ENCODE measurements at regions of chr9 and their contacts with region 1.

Region 1: GRCh38 chr9:34994260-34994899 is 4.8 kb downstream of the DNAJB5 start:
- DNase-seq: peak in 1 of 2 donors; percentile 62
- ATAC-seq: peak in 3 of 4 donors; percentile 14 to 17 (median 16)
- H3K4me3 ChIP-seq: peak overlapping the region; percentile 80
- H3K27ac ChIP-seq: no peak overlapping the region
- H3K4me1 ChIP-seq: peaks cover 45% of the 10 kb centered on the region
- H3K27me3 ChIP-seq: no peaks in the 10 kb centered on the region
- CTCF ChIP-seq: peak; percentile 56

Region 2: GRCh38 chr9:35071814-35072460 is 77.6 kb after region 1 on chr9:
- intact Hi-C with region 1: loop called in 1 of 2 experiments (anchors 5 kb)
- DNase-seq: peak; percentile 89 to 91
- ATAC-seq: peak; percentile 75 to 82 (median 76)
- H3K4me3 ChIP-seq: peak overlapping the region; percentile 100
- H3K27ac ChIP-seq: peak overlapping the region; percentile 100
- H3K4me1 ChIP-seq: peaks cover 29% of the 10 kb centered on the region
- H3K27me3 ChIP-seq: no peaks in the 10 kb centered on the region
- CTCF ChIP-seq: peak; percentile 39